ENCODE measurements at regions of chr1 and their contacts with region 1.

Region 1: DNA sequence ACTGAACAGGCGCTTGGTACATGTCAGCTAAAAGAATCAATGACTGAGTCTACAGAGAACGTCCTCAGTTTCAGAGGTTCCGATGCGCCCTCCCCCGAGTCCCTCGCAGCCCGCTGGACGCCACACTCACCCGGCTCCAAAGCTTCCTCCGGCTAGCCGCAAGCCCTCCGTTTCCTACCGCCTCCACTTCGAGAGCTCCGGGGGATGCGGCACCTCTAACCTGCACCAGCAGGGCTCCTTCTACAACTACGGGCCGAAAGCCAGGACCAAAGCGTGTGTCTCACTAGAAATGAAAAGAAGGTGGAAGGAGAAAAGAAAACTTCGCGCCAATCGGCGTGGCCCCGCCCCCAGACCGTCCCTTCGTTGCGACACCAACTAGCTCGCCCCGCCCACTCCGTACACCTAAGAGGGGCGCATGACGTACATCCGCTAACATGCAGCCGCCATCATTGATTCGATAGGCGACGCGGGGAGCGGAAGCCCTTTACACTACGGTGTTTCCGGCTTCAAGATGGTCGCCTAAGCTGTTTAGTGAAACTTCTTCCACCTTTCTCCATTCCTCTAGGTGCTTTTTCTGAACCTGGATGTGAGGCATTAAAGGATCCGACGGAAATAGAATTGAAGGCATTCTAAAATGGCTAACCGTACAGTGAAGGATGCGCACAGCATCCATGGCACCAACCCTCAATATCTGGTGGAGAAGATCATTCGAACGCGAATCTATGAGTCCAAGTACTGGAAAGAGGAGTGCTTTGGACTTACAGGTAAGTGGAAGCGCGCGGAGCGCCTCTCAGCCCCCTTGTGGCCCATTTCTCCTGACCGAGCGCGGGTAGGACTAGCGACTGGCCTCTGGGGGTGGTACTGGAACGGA is at the starts of genes ORC1 and PRPF38A:
- DNase-seq: peak; percentile 94 to 98 (median 96)
- H3K4me3 ChIP-seq: peak within 1 kb of the TSS; percentile 85 to 88
- H3K4me3 Mint-ChIP-seq: peak within 1 kb of the TSS; percentile 98 to 100 (median 100)
- H3K27ac ChIP-seq: peak within 1 kb of the TSS; percentile 91
- H3K27ac Mint-ChIP-seq: peak within 1 kb of the TSS; percentile 94 to 99 (median 99)
- H3K4me1 ChIP-seq: peaks cover 25% of the 10 kb centered on the region
- H3K4me1 Mint-ChIP-seq: peaks cover 22 to 44% (median 36%) of the 10 kb centered on the region in 4 donors
- H3K27me3 ChIP-seq: no peaks in the 10 kb centered on the region
- H3K27me3 Mint-ChIP-seq: no peaks in the 10 kb centered on the region
- total RNA-seq, gene ORC1: 1.1 to 1.5 TPM
- total RNA-seq, gene PRPF38A: 69.7 to 70.4 TPM

Region 2: DNA sequence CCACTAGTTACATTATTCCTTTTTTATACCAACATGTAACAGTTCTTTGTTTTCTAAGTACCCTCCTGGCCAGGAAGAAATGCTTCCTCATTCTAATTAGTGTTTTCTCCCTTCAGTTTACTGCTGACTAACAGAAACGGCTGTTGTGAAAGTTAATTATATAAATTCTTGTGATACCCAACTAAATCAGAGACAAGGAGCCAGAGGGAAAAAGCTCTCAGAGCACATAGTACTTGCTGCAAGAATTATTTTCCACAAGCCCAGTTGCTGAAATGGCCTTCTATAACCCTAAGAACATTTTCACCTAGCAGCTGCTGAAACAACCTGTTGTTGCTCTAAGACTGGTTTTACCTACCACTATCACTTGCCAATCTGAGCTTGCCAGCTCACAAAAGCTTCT is 1526.7 kb before region 1 on chr1:
- CTCF ChIA-PET with region 1: no interaction called
- POLR2A ChIA-PET with region 1: no interaction called
- intact Hi-C with region 1: no loop called
- DNase-seq: no peak
- H3K4me3 ChIP-seq: no peak overlapping the region
- H3K4me3 Mint-ChIP-seq: no peak overlapping the region
- H3K27ac ChIP-seq: no peak overlapping the region
- H3K27ac Mint-ChIP-seq: no peak overlapping the region
- H3K4me1 ChIP-seq: no peaks in the 10 kb centered on the region
- H3K4me1 Mint-ChIP-seq: peaks cover 14 to 27% (median 21%) of the 10 kb centered on the region in 4 donors
- H3K27me3 ChIP-seq: no peaks in the 10 kb centered on the region
- H3K27me3 Mint-ChIP-seq: no peaks in the 10 kb centered on the region

Region 3: GRCh38 chr1:52127181-52128180 is 276.9 kb before region 1 on chr1:
- CTCF ChIA-PET with region 1: no interaction called
- POLR2A ChIA-PET with region 1: no interaction called
- intact Hi-C with region 1: loop called (anchors 1 kb)
- DNase-seq: peak in 4 of 5 donors; percentile 18 to 31 (median 26)
- H3K4me3 ChIP-seq: no peak overlapping the region
- H3K4me3 Mint-ChIP-seq: no peak overlapping the region
- H3K27ac ChIP-seq: no peak overlapping the region
- H3K27ac Mint-ChIP-seq: no peak overlapping the region
- H3K4me1 ChIP-seq: no peaks in the 10 kb centered on the region
- H3K4me1 Mint-ChIP-seq: no peaks in the 10 kb centered on the region
- H3K27me3 ChIP-seq: no peaks in the 10 kb centered on the region
- H3K27me3 Mint-ChIP-seq: peaks cover 10 to 17% of the 10 kb centered on the region in 2 donors

Region 4: DNA sequence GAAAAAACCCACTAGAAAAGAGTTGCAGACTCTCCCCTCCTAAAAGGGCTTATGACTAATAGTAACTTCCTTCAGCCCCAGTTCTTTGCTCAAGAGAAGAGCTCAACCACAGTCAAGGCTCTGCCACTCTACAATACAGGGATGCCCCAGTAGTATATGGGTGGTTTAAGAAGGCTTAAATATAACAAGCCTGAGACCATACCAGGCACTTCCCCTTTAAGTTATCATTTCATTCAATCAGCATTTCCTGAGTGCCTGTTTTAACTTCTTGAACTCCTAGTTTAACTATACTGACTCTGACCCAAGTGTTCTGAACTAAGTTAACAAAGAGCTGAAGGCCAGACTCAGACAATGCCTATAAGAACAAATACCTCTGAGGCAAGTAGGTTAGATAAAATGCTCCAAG is 19.9 kb after region 1 on chr1:
- CTCF ChIA-PET with region 1: interaction called, 11 read pairs
- POLR2A ChIA-PET with region 1: interaction called, 74 read pairs
- intact Hi-C with region 1: loop called (anchors 1 kb)
- DNase-seq: peak; percentile 65 to 86 (median 71)
- H3K4me3 ChIP-seq: peak overlapping the region in 1 of 2 donors; percentile 4
- H3K4me3 Mint-ChIP-seq: peak overlapping the region; percentile 66 to 83 (median 74)
- H3K27ac ChIP-seq: peak overlapping the region; percentile 53
- H3K27ac Mint-ChIP-seq: peak overlapping the region; percentile 91 to 99 (median 94)
- H3K4me1 ChIP-seq: peaks cover 57% of the 10 kb centered on the region
- H3K4me1 Mint-ChIP-seq: peaks cover 38 to 49% (median 46%) of the 10 kb centered on the region in 4 donors
- H3K27me3 ChIP-seq: no peaks in the 10 kb centered on the region
- H3K27me3 Mint-ChIP-seq: no peaks in the 10 kb centered on the region

Region 5: GRCh38 chr1:52552505-52553361 is 148.4 kb after region 1 on chr1 and contains the start of gene TUT4:
- CTCF ChIA-PET with region 1: no interaction called
- POLR2A ChIA-PET with region 1: interaction called, 22 read pairs
- intact Hi-C with region 1: loop called (anchors 1 kb)
- DNase-seq: peak; percentile 67 to 83 (median 73)
- H3K4me3 ChIP-seq: peak within 1 kb of the TSS; percentile 68 to 95
- H3K4me3 Mint-ChIP-seq: peak within 1 kb of the TSS in 7 of 8 donors; percentile 48 to 87 (median 77)
- H3K27ac ChIP-seq: peak within 1 kb of the TSS; percentile 92
- H3K27ac Mint-ChIP-seq: peak within 1 kb of the TSS; percentile 57 to 91 (median 83)
- H3K4me1 ChIP-seq: peaks cover 41% of the 10 kb centered on the region
- H3K4me1 Mint-ChIP-seq: peaks cover 25 to 41% (median 33%) of the 10 kb centered on the region in 4 donors
- H3K27me3 ChIP-seq: no peaks in the 10 kb centered on the region
- H3K27me3 Mint-ChIP-seq: no peaks in the 10 kb centered on the region
- total RNA-seq, gene TUT4: 151 to 159 TPM

Region 6: GRCh38 chr1:52726265-52727113 is 322.1 kb after region 1 on chr1 and contains the start of gene ZYG11B:
- CTCF ChIA-PET with region 1: no interaction called
- POLR2A ChIA-PET with region 1: interaction called, 16 read pairs
- intact Hi-C with region 1: no loop called
- DNase-seq: peak; percentile 87 to 90 (median 89)
- H3K4me3 ChIP-seq: peak within 1 kb of the TSS; percentile 67 to 74
- H3K4me3 Mint-ChIP-seq: peak within 1 kb of the TSS; percentile 85 to 98 (median 96)
- H3K27ac ChIP-seq: peak within 1 kb of the TSS; percentile 74
- H3K27ac Mint-ChIP-seq: peak within 1 kb of the TSS; percentile 49 to 97 (median 94)
- H3K4me1 ChIP-seq: peaks cover 33% of the 10 kb centered on the region
- H3K4me1 Mint-ChIP-seq: peaks cover 35 to 41% (median 36%) of the 10 kb centered on the region in 4 donors
- H3K27me3 ChIP-seq: no peaks in the 10 kb centered on the region
- H3K27me3 Mint-ChIP-seq: peaks cover 0 to 2% of the 10 kb centered on the region in 2 donors
- total RNA-seq, gene ZYG11B: 21.7 to 23.1 TPM

Region 7: DNA sequence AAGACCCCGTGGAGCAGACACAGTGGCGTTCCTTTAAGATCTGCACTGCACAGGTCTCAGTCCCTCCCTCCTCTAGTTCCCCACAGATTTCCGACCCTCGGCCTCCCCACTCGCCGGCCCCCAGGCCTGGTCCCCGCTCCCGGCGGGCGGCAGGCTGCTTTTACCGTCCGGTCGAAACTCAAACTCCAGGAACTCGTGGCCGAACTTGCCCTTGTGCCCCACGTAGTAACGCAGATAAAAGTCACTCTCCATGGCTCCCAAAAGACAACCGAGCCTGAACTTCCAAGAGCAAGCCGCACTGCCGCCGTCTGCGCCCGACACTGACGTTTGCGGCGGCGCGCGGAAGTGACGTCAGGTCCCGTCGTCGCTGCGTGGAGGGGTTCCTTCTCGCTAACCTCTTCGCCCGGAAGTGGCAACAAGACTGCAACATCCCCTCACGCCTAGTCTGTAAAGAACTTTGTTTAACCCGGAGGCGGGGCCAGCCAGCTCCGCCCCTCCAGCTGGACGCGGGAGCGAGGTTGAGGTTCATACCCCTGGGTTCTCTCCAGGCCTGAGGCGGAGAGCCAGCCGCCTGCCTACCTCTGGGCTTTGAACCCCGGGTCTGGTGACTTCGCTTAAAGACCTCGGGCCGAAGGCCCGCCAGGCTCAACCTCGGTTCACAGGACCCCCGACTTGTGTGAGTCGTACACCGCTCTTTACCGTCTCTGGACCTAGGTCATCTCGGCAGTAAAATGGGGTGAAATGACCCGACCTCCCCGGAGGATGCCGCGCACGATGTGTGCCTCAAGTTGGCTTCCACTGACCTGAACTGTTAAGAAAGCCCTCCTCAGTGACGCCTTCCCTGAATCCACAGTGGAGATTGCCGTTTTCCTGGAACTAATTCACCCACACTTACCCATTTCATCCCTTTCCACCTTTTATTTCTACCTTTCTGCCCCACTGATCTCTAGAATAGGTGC is 834.1 kb after region 1 on chr1 and contains the start of gene MAGOH:
- CTCF ChIA-PET with region 1: no interaction called
- POLR2A ChIA-PET with region 1: no interaction called
- intact Hi-C with region 1: loop called (anchors 10 kb)
- DNase-seq: peak; percentile 93 to 95 (median 94)
- H3K4me3 ChIP-seq: peak within 1 kb of the TSS; percentile 87 to 96
- H3K4me3 Mint-ChIP-seq: peak within 1 kb of the TSS; percentile 96 to 99 (median 97)
- H3K27ac ChIP-seq: peak within 1 kb of the TSS; percentile 87
- H3K27ac Mint-ChIP-seq: peak within 1 kb of the TSS; percentile 97 to 99 (median 98)
- H3K4me1 ChIP-seq: peaks cover 31% of the 10 kb centered on the region
- H3K4me1 Mint-ChIP-seq: peaks cover 21 to 36% (median 29%) of the 10 kb centered on the region in 4 donors
- H3K27me3 ChIP-seq: no peaks in the 10 kb centered on the region
- H3K27me3 Mint-ChIP-seq: no peaks in the 10 kb centered on the region
- total RNA-seq, gene MAGOH: 46.7 to 49.9 TPM